Colonic mucosa (tissue), 4 donors: ENCODE measurements at regions of chr14 and their contacts with region 1.

Region 1: DNA sequence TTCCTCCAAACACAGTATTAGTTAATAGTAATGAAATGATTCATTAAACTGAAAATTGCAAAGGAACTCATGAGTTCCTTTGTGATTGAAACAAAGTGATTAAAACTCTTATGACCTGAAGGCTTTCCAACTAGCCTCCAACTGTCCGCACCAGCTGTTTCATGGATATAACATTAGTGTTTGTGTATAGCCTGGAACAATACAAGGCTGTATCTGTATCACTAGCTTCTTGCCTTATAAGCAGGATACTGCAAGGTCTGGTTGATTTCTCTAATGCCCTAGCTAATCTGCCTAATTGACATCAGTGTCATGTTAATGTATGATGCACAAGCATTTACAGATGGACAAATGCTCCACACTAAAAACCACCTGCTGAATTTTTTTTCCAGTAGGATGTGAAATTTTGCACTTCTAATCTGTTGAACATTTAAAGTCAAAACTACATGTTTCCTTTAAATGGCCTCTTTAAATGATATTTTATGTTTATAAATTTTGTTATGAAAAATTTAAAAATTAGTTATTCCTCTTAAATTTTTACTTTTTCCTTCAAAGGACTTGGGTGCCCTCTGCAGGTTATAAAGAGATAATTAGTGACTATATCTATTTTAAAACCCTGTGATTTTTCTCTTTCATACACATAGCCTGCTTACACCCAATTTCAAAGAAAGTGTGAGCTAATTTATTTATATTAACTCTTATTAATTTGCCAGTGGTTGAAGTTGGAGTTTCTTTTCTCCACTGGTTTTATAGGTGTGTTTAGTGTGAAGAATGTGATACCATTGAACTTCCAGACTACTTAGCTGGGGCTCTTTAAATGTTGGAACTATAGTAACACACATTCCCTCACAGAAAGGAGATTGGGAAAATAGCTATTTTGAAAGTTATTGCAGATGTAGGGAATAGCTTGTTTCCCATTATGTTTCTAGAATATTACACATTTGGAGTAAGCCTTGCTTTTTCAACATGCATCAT is 25.4 kb downstream of the AP5M1 start:
- DNase-seq: no peak
- H3K4me3 ChIP-seq: no peak overlapping the region
- H3K27ac ChIP-seq: no peak overlapping the region
- H3K4me1 ChIP-seq: no peaks in the 10 kb centered on the region
- H3K27me3 ChIP-seq: no peaks in the 10 kb centered on the region
- CTCF ChIP-seq: no peak

Region 2: DNA sequence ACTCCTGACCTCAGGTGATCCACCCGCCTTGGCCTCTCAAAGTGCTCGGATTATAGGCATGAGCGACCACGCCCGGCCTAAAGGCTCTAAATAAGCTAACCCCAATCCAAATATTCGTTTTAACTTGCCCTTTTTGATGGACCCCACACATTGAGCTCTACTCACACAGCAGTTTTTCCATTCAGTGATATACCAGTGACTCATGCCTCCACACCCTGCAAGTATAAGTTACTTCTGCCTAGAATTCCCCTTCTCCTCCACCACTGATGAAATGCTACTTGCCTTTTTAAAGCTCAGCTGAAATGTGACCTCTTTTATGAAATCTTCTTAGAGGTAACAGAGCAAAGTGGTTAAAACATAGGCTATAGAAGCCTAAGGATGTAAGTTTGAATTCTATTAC is 94.2 kb before region 1 on chr14:
- intact Hi-C with region 1: loop called (anchors 10 kb)
- DNase-seq: no peak
- H3K4me3 ChIP-seq: no peak overlapping the region
- H3K27ac ChIP-seq: no peak overlapping the region
- H3K4me1 ChIP-seq: no peaks in the 10 kb centered on the region
- H3K27me3 ChIP-seq: no peaks in the 10 kb centered on the region
- CTCF ChIP-seq: no peak